Colonic mucosa (tissue), 4 donors: ENCODE measurements at regions of chr4 and their contacts with region 1.

Region 1: DNA sequence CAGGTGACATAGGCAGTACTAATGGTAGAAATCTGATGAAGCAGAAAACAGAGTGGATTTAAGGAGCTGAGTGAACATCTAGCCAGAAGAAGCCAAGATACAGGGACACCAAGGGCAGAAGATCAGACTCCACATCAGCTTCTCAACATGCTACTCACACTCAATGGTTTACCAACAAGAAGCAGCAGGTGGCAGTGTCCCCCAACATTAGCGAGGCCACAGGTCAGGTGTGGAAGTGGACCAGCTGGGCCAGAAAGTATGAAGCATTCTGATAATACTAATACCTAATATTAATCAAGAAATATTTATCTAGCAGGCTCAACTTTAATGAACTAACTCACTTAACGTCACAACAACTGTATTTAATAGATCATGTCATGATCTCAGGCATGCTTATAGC is 73.4 kb upstream of the TTC29 start:
- DNase-seq: peak; percentile 63
- H3K4me3 ChIP-seq: no peak overlapping the region
- H3K27ac ChIP-seq: no peak overlapping the region
- H3K4me1 ChIP-seq: no peaks in the 10 kb centered on the region
- H3K27me3 ChIP-seq: no peaks in the 10 kb centered on the region
- CTCF ChIP-seq: peak; percentile 62

Region 2: DNA sequence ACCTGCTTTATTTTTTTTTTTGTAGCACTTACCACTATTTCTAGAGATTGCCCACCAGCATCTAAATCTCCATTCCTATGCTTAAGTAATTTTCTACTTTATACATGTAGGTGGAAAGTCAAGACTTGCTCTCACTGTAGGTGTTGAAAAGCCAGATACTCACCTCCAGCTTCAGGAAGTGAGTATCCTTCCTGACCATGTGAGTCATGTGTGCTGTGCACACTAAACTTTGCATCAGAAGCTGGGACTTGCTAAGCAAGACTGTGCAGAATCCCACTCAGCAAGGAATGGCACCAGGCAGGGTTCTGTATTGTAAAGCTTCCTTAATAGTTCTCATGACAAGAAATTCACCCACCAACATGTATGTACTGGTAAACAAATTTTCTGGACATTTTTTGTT is 228.5 kb before region 1 on chr4:
- intact Hi-C with region 1: no loop called
- DNase-seq: no peak
- H3K4me3 ChIP-seq: no peak overlapping the region
- H3K27ac ChIP-seq: no peak overlapping the region
- H3K4me1 ChIP-seq: no peaks in the 10 kb centered on the region
- H3K27me3 ChIP-seq: no peaks in the 10 kb centered on the region
- CTCF ChIP-seq: no peak

Region 3: DNA sequence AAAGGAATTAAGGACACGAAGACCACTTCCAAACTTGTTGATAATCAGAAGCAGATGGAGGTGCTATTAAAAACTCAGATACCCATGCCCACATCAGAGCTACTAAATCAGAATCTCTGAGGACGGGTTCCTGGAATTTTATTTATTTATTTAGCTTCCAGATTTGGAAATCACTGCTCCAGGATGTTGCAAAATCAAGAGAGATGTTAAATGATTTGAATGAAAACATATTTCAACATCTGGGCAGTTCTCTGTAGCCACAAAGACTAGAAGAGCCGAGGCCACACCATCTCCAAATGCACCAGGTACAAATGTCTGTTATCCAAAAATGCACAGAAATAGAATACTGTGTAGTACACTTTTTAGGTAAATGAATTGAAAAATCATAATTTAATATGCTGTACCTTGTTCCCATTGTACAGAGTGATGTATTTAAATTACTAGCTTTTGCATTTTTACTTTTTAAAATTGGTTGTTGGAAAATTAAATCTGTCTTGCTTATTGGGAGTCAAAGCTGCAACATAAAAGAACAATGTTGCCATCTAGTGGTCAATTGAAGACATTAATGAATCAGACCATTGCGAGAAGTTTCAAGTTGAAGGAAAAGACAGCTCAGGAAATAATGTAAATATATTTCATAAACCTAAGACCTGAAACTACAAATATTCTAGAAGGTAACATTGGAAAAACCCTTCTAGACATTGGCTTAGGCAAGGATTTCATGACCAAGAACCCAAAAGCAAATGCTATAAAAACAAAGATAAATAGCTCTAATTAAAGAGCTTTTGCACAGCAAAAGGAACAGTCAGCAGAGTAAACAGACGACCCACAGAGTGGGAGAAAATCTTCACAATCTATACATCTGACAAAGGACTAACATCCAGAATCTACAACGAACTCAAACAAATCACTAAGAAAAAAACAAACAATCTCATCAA is 77.9 kb after region 1 on chr4:
- intact Hi-C with region 1: loop called (anchors 2 kb)
- DNase-seq: no peak
- H3K4me3 ChIP-seq: no peak overlapping the region
- H3K27ac ChIP-seq: no peak overlapping the region
- H3K4me1 ChIP-seq: no peaks in the 10 kb centered on the region
- H3K27me3 ChIP-seq: no peaks in the 10 kb centered on the region
- CTCF ChIP-seq: peak; percentile 64

Region 4: DNA sequence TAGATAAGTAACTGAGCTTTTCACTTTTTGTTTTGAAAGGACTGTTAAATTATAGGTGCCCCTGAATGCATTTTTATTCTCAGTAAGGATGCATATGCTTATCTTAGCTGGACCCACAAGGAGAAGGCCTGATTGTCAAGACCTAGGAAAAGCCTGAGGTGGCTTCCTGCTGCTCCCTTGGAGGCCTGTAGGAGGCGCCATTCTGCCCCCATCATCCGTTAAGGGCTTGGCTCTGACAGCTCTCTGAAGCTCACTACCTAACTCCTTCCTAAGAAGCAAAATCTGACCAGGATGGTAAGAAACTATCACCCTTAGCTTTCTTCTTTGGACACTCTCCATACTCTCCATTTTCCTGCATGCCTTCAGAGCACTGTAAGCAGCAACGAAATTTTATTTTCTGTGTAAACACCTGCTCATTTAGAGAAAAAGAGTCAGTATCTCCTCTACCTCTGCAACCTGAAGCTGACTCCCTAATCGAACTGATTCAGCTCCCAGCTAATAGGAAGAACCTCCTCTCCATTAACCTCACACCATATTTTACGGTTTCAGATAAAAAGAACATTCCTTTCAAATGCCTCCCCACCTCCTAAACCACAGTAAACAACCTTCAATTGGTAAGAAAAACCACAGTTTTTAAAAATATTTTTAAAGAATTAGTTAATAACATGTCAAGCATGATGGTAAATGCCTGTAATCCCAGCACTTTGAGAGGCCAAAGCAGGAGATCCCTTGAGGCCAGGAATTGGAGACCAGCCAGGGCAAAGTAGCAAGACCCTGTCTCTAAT is 388.4 kb after region 1 on chr4:
- intact Hi-C with region 1: no loop called
- DNase-seq: no peak
- H3K4me3 ChIP-seq: no peak overlapping the region
- H3K27ac ChIP-seq: no peak overlapping the region
- H3K4me1 ChIP-seq: no peaks in the 10 kb centered on the region
- H3K27me3 ChIP-seq: no peaks in the 10 kb centered on the region
- CTCF ChIP-seq: peak; percentile 15

Region 5: GRCh38 chr4:147590249-147590920 is 571.3 kb after region 1 on chr4:
- intact Hi-C with region 1: loop called (anchors 10 kb)
- DNase-seq: peak; percentile 40
- H3K4me3 ChIP-seq: no peak overlapping the region
- H3K27ac ChIP-seq: no peak overlapping the region
- H3K4me1 ChIP-seq: no peaks in the 10 kb centered on the region
- H3K27me3 ChIP-seq: no peaks in the 10 kb centered on the region
- CTCF ChIP-seq: peak; percentile 42